ENCODE measurements at regions of chr10 and their contacts with region 1.

Region 1: DNA sequence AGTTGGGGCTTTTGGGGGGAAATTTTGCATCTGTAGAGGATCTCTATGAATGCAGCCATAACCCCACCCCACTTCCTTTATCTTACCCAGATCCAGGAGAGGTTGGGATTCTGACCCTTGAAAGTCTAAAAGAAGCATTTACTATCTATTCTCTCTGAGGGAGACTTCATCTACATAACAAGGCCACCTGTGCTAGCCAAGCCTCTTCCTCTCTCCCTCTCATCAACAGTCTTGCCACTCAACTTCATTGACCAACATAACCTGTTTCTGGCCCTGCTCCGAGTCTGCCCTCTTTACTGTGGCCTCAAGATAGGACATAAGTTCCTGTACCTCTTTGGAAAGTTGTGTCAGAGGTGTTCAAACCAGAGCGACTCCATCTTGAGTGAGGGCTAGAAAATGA is 19.4 kb downstream of the TUBAL3 start:
- DNase-seq: no peak
- H3K4me3 ChIP-seq: no peak overlapping the region
- H3K4me3 Mint-ChIP-seq: no peak overlapping the region
- H3K27ac ChIP-seq: no peak overlapping the region
- H3K27ac Mint-ChIP-seq: no peak overlapping the region
- H3K4me1 ChIP-seq: no peaks in the 10 kb centered on the region
- H3K4me1 Mint-ChIP-seq: peaks cover 0 to 2% (median 0%) of the 10 kb centered on the region in 4 donors
- H3K27me3 ChIP-seq: no peaks in the 10 kb centered on the region
- H3K27me3 Mint-ChIP-seq: peaks cover 2 to 9% of the 10 kb centered on the region in 2 donors

Region 2: DNA sequence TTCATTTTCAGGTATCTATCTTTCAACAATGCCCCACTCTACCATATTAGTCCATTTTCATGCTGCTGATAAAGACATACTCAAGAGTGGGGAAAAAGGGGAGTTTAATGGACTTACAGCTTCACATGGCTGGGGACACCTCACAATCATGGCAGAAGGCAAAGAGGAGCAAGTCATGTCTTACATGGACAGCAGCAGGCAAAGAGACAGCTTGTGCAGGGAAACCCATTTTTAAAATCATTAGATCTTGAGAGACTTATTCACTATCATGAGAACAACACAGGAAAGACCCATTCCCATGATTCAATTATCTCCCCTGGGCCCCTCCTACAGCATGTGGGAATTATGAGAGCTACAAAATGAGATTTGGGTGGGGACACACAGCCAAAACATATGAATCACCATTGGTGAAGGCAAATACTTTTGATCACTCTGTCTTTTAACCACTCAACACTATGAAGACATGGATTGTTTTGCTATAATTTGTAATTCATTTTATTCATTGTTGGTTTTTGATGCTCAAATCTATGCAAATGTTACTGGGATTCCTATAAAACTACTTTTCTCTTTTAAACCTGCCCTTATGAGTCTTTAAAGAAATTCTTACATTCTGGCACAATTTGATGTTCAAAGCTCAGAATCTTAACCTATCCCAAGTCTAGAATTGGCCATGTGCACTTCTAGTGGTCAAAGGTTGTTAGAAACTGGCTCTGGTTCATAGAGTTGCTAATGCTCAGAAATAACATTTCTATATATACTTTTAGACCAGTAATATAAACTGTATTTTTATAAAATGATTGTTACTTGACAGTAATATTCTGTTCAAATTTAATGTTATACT is 173.3 kb before region 1 on chr10:
- CTCF ChIA-PET with region 1: interaction called, 4 read pairs
- POLR2A ChIA-PET with region 1: no interaction called
- intact Hi-C with region 1: loop called (anchors 5 kb)
- DNase-seq: no peak
- H3K4me3 ChIP-seq: no peak overlapping the region
- H3K4me3 Mint-ChIP-seq: no peak overlapping the region
- H3K27ac ChIP-seq: no peak overlapping the region
- H3K27ac Mint-ChIP-seq: peak overlapping the region in 1 of 7 donors; percentile 5
- H3K4me1 ChIP-seq: no peaks in the 10 kb centered on the region
- H3K4me1 Mint-ChIP-seq: peaks cover 0 to 4% (median 1%) of the 10 kb centered on the region in 4 donors
- H3K27me3 ChIP-seq: no peaks in the 10 kb centered on the region
- H3K27me3 Mint-ChIP-seq: peaks cover 0 to 4% of the 10 kb centered on the region in 2 donors